PC-9 (cell line): ENCODE measurements at regions of chr3 and their contacts with region 1.

Region 1: DNA sequence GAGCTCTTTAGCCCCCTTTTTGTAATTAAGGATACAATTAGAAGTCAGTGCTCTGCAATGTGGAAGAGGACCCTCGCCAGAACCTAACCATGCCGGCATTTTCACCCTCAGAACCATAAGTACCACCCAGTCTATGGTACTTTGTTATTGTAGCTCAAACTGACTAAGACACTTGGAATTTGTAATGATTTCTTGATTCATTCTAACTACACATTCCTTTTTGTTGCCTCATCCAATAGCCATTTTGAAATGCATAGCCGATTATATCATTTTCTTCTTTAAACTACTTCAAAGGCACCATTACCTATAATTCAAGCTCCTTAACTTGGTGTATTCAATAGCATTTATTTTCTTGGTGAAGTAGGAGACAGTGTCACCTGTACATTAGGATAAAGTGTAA is 61.4 kb downstream of the GLB1 start:
- DNase-seq: peak in 1 of 2 experiments; percentile 56
- H3K4me3 ChIP-seq: no peak overlapping the region
- H3K27ac ChIP-seq: peak overlapping the region; percentile 39; the same call in 1 of the 2 replicates
- H3K4me1 ChIP-seq: peaks cover 19% of the 10 kb centered on the region
- H3K27me3 ChIP-seq: no peaks in the 10 kb centered on the region
- CTCF ChIP-seq: no peak

Region 2: GRCh38 chr3:32960404-32961170 is 75.0 kb before region 1 on chr3:
- CTCF ChIA-PET with region 1: no interaction called
- POLR2A ChIA-PET with region 1: interaction called, 11 read pairs
- intact Hi-C with region 1: no loop called
- DNase-seq: no peak
- H3K4me3 ChIP-seq: no peak overlapping the region
- H3K27ac ChIP-seq: no peak overlapping the region
- H3K4me1 ChIP-seq: no peaks in the 10 kb centered on the region
- H3K27me3 ChIP-seq: no peaks in the 10 kb centered on the region
- CTCF ChIP-seq: no peak

Region 3: GRCh38 chr3:33052671-33053070 is 17.1 kb after region 1 on chr3:
- CTCF ChIA-PET with region 1: interaction called, 11 read pairs
- POLR2A ChIA-PET with region 1: no interaction called
- intact Hi-C with region 1: no loop called
- DNase-seq: no peak
- H3K4me3 ChIP-seq: no peak overlapping the region
- H3K27ac ChIP-seq: no peak overlapping the region
- H3K4me1 ChIP-seq: no peaks in the 10 kb centered on the region
- H3K27me3 ChIP-seq: no peaks in the 10 kb centered on the region
- CTCF ChIP-seq: no peak